ENCODE measurements at regions of chr10 and their contacts with region 1.

Region 1: GRCh38 chr10:43396928-43397624 is 11.9 kb downstream of the HNRNPF start:
- DNase-seq: peak; percentile 89 to 90
- ATAC-seq: peak; percentile 91 to 93
- H3K4me3 ChIP-seq: peak overlapping the region; percentile 62 to 93 (median 76)
- H3K27ac ChIP-seq: peak overlapping the region; percentile 96 to 100 (median 97)
- H3K4me1 ChIP-seq: peaks cover 50 to 56% of the 10 kb centered on the region in 2 donors
- H3K27me3 ChIP-seq: no peaks in the 10 kb centered on the region
- CTCF ChIP-seq: no peak
- POLR2A ChIP-seq: peak; percentile 86

Region 2: DNA sequence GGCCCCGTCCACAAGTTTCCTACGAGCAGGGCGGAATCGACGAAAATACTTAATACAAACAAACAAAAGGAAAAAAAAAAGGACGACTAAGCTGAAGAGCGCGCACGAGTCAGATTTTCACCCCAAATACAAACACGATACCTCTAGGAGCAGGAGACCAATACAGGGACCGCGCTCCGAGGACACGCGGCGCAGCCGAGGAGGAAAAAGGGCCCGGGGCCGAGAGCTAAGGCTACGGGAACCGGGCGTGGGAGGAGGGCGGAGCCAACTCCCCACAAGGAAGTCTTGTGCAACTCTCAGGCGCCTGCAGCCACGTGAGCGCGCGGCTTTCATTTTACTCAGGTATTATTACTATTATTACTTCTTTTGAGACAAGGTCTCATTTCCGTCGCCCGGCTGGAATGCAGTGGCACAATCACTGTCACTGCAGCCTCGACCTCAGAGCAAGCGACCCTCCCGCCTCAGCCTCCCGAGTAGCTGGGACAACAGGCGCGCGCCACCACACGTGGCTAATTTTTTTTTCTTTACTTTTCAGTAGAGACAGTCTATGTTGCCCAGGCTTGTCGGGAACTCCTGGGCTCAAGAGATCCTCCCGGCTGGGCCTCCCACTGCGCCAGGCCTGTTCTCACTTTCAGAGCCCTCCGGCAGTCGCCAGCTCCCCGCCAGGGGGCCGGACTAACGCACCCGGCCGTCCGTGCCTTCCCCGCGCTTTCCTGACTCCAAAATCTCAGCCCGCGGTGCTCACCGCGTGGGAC is 10.7 kb after region 1 on chr10:
- in situ Hi-C with region 1: no loop called
- intact Hi-C with region 1: loop called (anchors 1 kb)
- DNase-seq: peak; percentile 90 to 91
- ATAC-seq: peak; percentile 76 to 82
- H3K4me3 ChIP-seq: peak overlapping the region; percentile 69 to 90 (median 84)
- H3K27ac ChIP-seq: peak overlapping the region; percentile 95 to 98 (median 96)
- H3K4me1 ChIP-seq: peaks cover 24 to 37% of the 10 kb centered on the region in 2 donors
- H3K27me3 ChIP-seq: no peaks in the 10 kb centered on the region
- CTCF ChIP-seq: peak in 4 of 5 experiments; percentile 32 to 54 (median 47)
- POLR2A ChIP-seq: peak; percentile 82 to 87

Region 3: DNA sequence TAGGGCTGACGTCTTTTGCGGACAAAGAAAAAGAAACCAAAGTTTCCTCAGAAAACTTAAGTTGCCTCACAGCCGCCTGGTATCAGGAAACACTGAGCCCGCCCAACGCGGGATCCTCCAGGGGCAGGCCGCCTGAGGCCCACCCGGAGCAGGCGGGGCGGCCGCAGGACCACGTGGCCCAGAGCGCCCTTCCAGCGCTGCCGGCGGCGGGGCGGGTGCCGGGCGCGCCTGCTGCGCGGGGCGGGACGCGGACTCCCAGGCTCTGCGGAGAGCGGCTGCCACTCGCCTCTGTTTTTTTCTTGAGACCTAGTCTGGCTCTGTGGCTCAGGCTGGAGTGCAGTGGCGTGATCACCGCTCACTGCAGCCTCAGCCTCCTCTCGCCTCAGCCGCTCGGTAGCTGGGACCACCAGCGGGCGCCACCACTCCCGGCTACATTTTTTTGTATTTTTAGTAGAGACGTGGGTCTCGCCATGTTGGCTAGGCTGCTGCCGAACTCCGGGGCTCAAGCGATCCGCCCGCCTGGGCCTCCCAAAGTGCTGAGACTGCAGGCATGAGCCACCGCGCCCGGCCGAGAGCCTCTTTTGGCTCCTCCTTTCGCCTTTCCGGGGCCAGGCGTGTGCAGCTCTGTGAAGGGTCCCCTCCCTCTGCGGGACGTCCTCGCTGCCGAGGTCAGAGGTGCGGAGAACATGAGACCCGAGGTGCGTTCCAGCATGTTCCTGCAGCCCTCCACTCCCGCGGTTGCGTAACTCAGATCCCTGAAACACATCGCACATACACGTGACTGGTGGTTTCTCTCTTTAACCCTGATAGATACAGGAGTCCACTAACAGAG is 23.5 kb after region 1 on chr10:
- in situ Hi-C with region 1: no loop called
- intact Hi-C with region 1: loop called (anchors 1 kb)
- DNase-seq: peak; percentile 87 to 95
- ATAC-seq: peak; percentile 92 to 93
- H3K4me3 ChIP-seq: peak overlapping the region; percentile 60 to 87 (median 79)
- H3K27ac ChIP-seq: peak overlapping the region; percentile 92 to 100 (median 96)
- H3K4me1 ChIP-seq: peaks cover 0 to 11% of the 10 kb centered on the region in 2 donors
- H3K27me3 ChIP-seq: no peaks in the 10 kb centered on the region
- CTCF ChIP-seq: peak in 1 of 5 experiments; percentile 21
- POLR2A ChIP-seq: peak; percentile 68 to 88

Region 4: GRCh38 chr10:43436400-43437140 is 39.5 kb after region 1 on chr10 and contains the start of gene ZNF487:
- in situ Hi-C with region 1: no loop called
- intact Hi-C with region 1: loop called (anchors 2 kb)
- DNase-seq: peak; percentile 81 to 85
- ATAC-seq: peak; percentile 95 to 96
- H3K4me3 ChIP-seq: peak within 1 kb of the TSS; percentile 70 to 87 (median 77)
- H3K27ac ChIP-seq: peak within 1 kb of the TSS; percentile 91 to 99 (median 96)
- H3K4me1 ChIP-seq: peaks cover 6 to 8% of the 10 kb centered on the region in 2 donors
- H3K27me3 ChIP-seq: no peaks in the 10 kb centered on the region
- CTCF ChIP-seq: peak in 3 of 5 experiments; percentile 10 to 39 (median 31)
- POLR2A ChIP-seq: peak; percentile 81 to 94
- total RNA-seq, gene ZNF487: 0.80 to 2.4 (median 1.7) TPM

Region 5: GRCh38 chr10:43453266-43453831 is 56.3 kb after region 1 on chr10:
- in situ Hi-C with region 1: loop called in 1 of 4 experiments (anchors 5 kb)
- intact Hi-C with region 1: no loop called
- DNase-seq: no peak
- ATAC-seq: no peak
- H3K4me3 ChIP-seq: no peak overlapping the region
- H3K27ac ChIP-seq: no peak overlapping the region
- H3K4me1 ChIP-seq: peaks cover 13% of the 10 kb centered on the region in 2 donors
- H3K27me3 ChIP-seq: no peaks in the 10 kb centered on the region
- CTCF ChIP-seq: no peak
- POLR2A ChIP-seq: no peak

Region 6: GRCh38 chr10:43574001-43574892 is 177.2 kb after region 1 on chr10 and contains the start of gene ZNF239:
- in situ Hi-C with region 1: no loop called
- intact Hi-C with region 1: loop called (anchors 2 kb)
- DNase-seq: peak; percentile 81 to 83
- ATAC-seq: peak; percentile 96 to 97
- H3K4me3 ChIP-seq: peak within 1 kb of the TSS; percentile 58 to 77 (median 72)
- H3K27ac ChIP-seq: peak within 1 kb of the TSS; percentile 62 to 78 (median 72)
- H3K4me1 ChIP-seq: peaks cover 10 to 11% of the 10 kb centered on the region in 2 donors
- H3K27me3 ChIP-seq: no peaks in the 10 kb centered on the region
- CTCF ChIP-seq: peak in 2 of 5 experiments; percentile 14 to 19
- POLR2A ChIP-seq: peak in 1 of 2 donors; percentile 16
- total RNA-seq, gene ZNF239: 2.0 to 4.3 (median 3.2) TPM